ENCODE measurements at regions of chr1 and their contacts with region 1.

Region 1: DNA sequence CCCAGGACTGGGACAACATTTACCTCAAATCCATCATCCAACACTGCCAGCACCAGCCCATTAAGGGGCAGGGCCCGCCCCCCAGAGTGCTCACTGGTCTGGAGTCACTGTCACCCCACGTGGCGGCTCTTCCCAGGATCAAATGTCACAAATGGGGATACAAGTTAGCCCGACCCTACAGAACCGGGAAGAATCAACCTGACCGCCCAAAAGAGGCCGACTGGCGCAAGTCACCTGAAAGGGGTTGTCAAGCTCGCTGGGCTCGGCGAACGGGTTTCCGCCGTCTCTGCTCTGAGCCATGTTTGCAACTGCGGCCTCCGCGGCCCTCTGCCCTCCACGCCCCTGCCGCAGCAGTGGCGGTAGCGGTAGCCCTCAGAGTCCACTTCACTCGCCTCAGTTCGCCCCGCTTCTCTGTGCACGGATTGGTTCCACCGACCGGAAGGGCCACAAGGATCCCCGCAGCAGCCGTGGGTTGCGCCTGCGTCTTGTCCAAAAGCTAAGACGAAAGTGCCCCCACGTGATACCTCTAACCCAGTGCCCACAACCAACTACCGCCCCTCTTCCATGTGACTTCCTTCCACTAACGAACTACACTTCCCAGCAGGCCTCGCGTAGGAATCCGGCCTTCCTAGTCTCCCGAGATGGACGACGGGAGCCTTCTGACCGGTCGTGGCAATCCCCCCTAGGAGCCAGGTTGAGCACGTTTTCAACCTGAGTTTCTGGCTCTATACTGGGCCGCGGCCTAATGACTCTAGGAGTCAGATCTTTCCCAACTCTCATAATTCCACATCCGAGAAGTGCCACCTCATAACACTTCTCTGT is at the start of gene SCAMP3:
- DNase-seq: peak; percentile 71
- ATAC-seq: peak; percentile 95
- H3K4me3 Mint-ChIP-seq: peak within 1 kb of the TSS; percentile 98
- H3K27ac Mint-ChIP-seq: peak within 1 kb of the TSS; percentile 92
- H3K4me1 Mint-ChIP-seq: peaks cover 33% of the 10 kb centered on the region
- H3K27me3 Mint-ChIP-seq: no peaks in the 10 kb centered on the region
- CTCF ChIP-seq: no peak
- total RNA-seq, gene SCAMP3: 71.8 and 78.6 TPM in 2 replicates

Region 2: DNA sequence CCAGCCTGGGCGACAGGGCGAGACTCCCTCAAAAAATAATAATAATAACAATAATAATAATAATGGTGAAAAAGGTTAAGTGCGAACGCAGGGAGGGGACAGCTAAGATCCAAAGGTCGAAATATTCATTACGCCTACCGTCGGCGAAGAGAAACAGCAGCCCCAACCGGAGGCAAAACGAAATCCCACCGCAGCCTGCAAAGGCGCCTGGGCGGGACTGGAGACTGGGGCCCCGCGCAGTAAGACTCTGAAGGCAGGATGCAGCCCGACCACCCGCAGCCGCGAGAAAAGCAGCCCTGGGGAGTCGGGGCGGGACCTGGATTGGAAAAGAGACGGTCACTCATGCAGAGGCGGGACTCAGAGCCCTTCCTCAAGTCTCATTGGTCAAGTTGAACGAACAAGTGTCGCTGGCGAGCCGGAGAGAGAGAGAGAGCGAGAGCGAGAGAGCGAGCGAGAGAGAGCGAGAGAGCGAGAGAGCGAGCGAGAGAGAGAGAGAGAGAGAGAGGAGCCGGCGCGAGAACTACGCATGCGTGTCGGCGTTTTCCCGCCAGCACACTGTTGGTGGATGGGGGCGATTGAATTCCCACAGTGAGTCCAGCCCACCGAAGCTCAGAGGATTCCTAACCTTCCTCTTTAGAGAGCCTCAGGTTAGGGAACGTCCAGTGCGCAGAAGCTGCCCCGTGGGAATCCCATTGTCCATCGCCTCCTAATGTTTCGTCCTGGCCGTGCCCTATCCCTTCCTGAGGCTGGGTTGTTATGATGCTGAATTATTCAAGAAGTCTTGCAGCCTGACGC is 17.5 kb before region 1 on chr1:
- CTCF ChIA-PET with region 1: interaction called, 47 read pairs
- POLR2A ChIA-PET with region 1: interaction called, 30 read pairs
- intact Hi-C with region 1: loop called (anchors 1 kb)
- DNase-seq: peak; percentile 87
- ATAC-seq: peak; percentile 97
- H3K4me3 Mint-ChIP-seq: peak overlapping the region; percentile 85
- H3K27ac Mint-ChIP-seq: peak overlapping the region; percentile 96
- H3K4me1 Mint-ChIP-seq: peaks cover 39% of the 10 kb centered on the region
- H3K27me3 Mint-ChIP-seq: peaks cover 2% of the 10 kb centered on the region
- CTCF ChIP-seq: no peak

Measured in activated B cell treated with CpG ODN at 0.5 μM for 24 hours (primary cell).